ENCODE measurements at regions of chr5 and their contacts with region 1.

Region 1: GRCh38 chr5:34838785-34839714 is at the start of gene TTC23L:
- DNase-seq: peak; percentile 95
- ATAC-seq: peak; percentile 95
- H3K4me3 Mint-ChIP-seq: peak within 1 kb of the TSS; percentile 80
- H3K27ac Mint-ChIP-seq: peak within 1 kb of the TSS; percentile 95
- H3K4me1 Mint-ChIP-seq: peaks cover 13% of the 10 kb centered on the region
- H3K27me3 Mint-ChIP-seq: no peaks in the 10 kb centered on the region
- total RNA-seq, gene TTC23L: 0.26 to 0.30 TPM

Region 2: DNA sequence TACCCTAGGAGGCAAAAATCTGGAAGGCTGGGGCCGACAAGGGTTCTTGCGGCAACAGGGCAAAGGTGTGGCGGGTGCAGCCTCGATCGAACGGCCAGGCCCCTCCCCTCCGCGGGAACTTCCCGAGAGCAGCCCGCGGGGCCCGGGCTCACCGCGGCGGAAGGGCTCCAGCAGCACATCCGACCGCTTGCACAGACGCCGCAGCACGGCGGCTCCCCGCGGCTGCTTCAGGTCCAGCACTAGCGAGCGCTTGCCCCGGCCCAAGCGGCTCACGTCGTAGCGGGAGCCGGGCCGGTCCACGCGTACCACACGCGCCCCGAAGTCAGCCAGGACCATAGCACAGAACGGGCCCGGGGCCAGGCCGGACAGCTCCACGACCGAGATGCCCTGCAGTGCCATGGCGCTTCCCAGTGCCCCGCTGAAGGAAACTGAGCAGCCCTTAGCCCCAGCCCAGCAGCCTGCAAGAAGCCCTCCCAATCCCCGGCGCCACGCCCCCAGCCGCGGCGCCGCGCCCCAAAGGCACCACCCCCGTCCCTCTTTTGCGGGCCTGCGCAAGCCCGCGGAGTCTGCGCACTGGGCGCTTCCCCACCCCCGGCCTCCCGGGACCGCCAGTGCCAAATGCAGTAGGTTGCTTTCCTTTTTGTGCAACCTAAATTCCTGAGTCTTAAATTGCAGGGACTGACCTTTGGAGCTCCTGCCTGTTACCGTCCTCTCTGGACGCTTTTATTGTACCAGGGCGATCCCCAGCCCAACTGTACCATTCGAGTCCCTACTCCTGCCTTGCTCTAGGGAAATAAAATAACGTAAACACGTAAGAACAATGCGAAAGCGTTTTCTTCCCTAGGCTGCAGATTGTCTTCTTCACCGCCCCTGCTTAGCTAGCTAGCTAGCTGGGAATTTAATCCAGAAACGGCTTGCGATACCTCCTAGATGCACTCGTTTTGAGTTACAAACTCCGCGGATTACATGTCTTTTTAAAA is 831.1 kb before region 1 on chr5 and contains the start of gene AMACR:
- CTCF ChIA-PET with region 1: no interaction called
- POLR2A ChIA-PET with region 1: no interaction called
- intact Hi-C with region 1: loop called in 1 of 2 experiments (anchors 2 kb)
- DNase-seq: peak; percentile 96
- ATAC-seq: peak; percentile 95
- H3K4me3 Mint-ChIP-seq: peak within 1 kb of the TSS; percentile 77
- H3K27ac Mint-ChIP-seq: peak within 1 kb of the TSS; percentile 90
- H3K4me1 Mint-ChIP-seq: peaks cover 32% of the 10 kb centered on the region
- H3K27me3 Mint-ChIP-seq: no peaks in the 10 kb centered on the region
- total RNA-seq, gene AMACR: 3.3 to 6.0 TPM

Region 3: DNA sequence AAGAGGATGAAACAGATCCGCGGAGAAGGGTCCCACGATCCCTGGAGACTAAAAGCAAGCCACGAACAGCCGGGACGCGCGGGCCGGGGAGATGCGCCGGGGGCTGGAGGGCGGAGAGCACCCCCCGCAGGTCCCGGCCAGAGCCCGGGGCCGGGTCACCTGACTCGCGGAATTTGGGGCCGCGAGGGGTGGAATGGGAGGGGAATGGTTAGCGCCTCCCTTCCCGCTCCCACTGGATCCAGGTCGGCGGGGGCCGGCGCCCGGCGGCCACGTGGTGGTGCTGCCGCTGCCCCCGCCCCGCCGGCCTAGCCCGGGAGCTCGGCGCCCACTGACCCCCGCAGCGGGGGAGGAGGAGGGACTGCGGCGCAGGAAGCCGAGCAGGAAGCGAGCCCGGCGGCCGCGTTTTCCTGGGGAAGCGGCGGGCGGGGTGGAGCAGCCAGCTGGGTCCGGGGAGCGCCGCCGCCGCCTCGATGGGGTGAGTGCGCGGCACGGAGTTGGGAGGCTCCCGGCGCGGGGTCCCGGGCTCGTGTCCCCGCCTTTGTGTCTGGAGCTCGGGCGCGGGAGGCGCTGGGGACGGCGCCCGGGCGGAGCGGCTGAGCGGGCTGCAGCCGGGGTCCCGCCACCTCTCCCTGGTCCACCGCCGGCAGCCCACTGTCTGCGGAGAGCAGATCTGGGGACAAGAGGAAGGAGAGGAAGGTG is 182.9 kb before region 1 on chr5 and contains the start of gene RAI14:
- CTCF ChIA-PET with region 1: no interaction called
- POLR2A ChIA-PET with region 1: no interaction called
- intact Hi-C with region 1: loop called (anchors 2 kb)
- DNase-seq: peak; percentile 37
- ATAC-seq: peak; percentile 30
- H3K4me3 Mint-ChIP-seq: peak within 1 kb of the TSS; percentile 83
- H3K27ac Mint-ChIP-seq: peak within 1 kb of the TSS; percentile 85
- H3K4me1 Mint-ChIP-seq: peaks cover 16% of the 10 kb centered on the region
- H3K27me3 Mint-ChIP-seq: peaks cover 32% of the 10 kb centered on the region
- total RNA-seq, gene RAI14: 4.5 to 7.1 TPM

Region 4: GRCh38 chr5:34817563-34818351 is 21.3 kb before region 1 on chr5:
- CTCF ChIA-PET with region 1: no interaction called
- POLR2A ChIA-PET with region 1: no interaction called
- intact Hi-C with region 1: no loop called
- DNase-seq: no peak
- ATAC-seq: no peak
- H3K4me3 Mint-ChIP-seq: no peak overlapping the region
- H3K27ac Mint-ChIP-seq: no peak overlapping the region
- H3K4me1 Mint-ChIP-seq: no peaks in the 10 kb centered on the region
- H3K27me3 Mint-ChIP-seq: no peaks in the 10 kb centered on the region

Region 5: DNA sequence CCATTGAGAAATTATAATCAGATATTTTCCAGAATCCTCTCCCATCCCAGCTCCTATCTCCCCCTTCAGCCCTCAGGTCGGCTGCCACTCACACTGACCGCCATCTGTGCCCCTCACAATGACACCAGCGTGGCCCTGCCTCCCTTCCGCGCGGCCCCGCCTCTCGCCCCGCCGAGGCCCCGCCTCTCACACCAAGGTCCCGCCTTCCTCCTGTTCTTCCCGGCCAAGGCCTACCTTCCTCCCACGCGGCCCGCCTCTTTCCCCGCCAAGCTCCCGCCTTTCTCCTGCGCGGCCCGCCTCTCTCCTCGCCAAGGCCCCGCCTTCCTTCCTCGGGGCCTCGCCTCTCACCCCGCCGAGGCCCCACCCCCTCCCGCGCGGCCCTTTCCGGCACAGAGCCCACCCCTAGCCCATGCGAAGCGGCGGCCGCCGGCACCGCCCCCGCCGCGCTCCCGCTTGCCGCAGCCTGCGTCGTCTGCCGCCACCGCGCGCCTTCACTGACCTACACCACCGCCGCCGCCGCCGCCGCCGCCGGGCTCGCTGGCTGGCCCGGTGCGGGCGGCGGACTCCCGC is 90.2 kb after region 1 on chr5 and contains the start of gene DNAJC21:
- CTCF ChIA-PET with region 1: no interaction called
- POLR2A ChIA-PET with region 1: no interaction called
- intact Hi-C with region 1: loop called in 1 of 2 experiments (anchors 1 kb)
- DNase-seq: peak; percentile 99
- ATAC-seq: peak; percentile 95
- H3K4me3 Mint-ChIP-seq: peak within 1 kb of the TSS; percentile 90
- H3K27ac Mint-ChIP-seq: peak within 1 kb of the TSS; percentile 93
- H3K4me1 Mint-ChIP-seq: peaks cover 43% of the 10 kb centered on the region
- H3K27me3 Mint-ChIP-seq: no peaks in the 10 kb centered on the region
- total RNA-seq, gene DNAJC21: 58.5 to 58.6 TPM

Region 6: GRCh38 chr5:36151434-36152323 is 1312.6 kb after region 1 on chr5 and contains the starts of genes LMBRD2 and SKP2:
- CTCF ChIA-PET with region 1: no interaction called
- POLR2A ChIA-PET with region 1: no interaction called
- intact Hi-C with region 1: loop called in 1 of 2 experiments (anchors 5 kb)
- DNase-seq: peak; percentile 98
- ATAC-seq: peak; percentile 99
- H3K4me3 Mint-ChIP-seq: peak within 1 kb of the TSS; percentile 97
- H3K27ac Mint-ChIP-seq: peak within 1 kb of the TSS; percentile 91
- H3K4me1 Mint-ChIP-seq: peaks cover 55% of the 10 kb centered on the region
- H3K27me3 Mint-ChIP-seq: no peaks in the 10 kb centered on the region
- total RNA-seq, gene LMBRD2: 9.3 to 10.2 TPM
- total RNA-seq, gene SKP2: 48.0 to 56.8 TPM

Measured in activated CD4-positive, alpha-beta T cell treated with anti-CD3 and anti-CD28 coated beads for 36 hours (primary cell).